Gastrocnemius medialis (tissue), 4 donors: ENCODE measurements at regions of chr11 and their contacts with region 1.

Region 1: GRCh38 chr11:117205211-117205818 is 6.1 kb downstream of the TAGLN start:
- DNase-seq: no peak
- ATAC-seq: no peak
- H3K4me3 ChIP-seq: no peak overlapping the region
- H3K27ac ChIP-seq: peak overlapping the region in 2 of 4 donors; percentile 15 to 77
- H3K4me1 ChIP-seq: peaks cover 22 to 25% of the 10 kb centered on the region in 2 donors
- H3K27me3 ChIP-seq: no peaks in the 10 kb centered on the region
- CTCF ChIP-seq: no peak
- POLR2A ChIP-seq: no peak

Region 2: DNA sequence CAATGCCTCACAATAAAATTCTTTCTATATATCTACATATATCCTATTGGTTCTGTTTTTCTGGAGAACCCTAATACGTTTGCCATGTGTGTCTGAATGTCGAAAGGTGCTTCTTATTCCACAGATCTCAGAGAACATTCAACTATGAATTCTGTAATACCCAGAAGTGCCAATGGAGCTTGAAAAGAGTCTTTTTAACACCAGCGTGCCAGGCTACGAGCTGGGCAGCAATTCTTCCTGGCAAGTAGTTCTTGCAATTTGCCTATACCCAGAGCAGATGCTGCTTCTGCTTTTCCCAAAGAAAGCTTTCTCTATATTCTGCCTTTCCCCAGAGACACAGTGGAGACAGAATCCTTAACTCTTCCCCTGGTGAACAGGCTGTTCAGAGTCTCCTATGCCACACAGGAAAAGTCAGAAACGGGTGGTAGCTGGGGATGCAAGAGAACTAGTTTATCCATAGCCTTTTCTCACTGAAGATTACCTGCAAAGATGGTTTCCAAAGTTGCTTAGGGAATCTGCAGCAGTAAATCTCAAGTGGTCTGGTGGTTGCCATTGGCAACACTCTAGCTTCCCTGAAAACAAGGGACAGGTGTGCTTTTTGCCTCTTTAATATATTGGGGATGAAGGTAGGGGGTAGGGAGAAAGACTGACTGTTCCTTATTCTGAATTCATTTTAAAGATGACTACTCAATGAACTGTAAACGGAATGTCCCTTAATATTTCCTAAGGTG is 78.0 kb before region 1 on chr11:
- in situ Hi-C with region 1: no loop called
- intact Hi-C with region 1: loop called (anchors 2 kb)
- DNase-seq: no peak
- ATAC-seq: no peak
- H3K4me3 ChIP-seq: no peak overlapping the region
- H3K27ac ChIP-seq: no peak overlapping the region
- H3K4me1 ChIP-seq: no peaks in the 10 kb centered on the region
- H3K27me3 ChIP-seq: no peaks in the 10 kb centered on the region
- CTCF ChIP-seq: no peak
- POLR2A ChIP-seq: no peak